Tibial artery (tissue), 4 donors: ENCODE measurements at regions of chr2 and their contacts with region 1.

Region 1: DNA sequence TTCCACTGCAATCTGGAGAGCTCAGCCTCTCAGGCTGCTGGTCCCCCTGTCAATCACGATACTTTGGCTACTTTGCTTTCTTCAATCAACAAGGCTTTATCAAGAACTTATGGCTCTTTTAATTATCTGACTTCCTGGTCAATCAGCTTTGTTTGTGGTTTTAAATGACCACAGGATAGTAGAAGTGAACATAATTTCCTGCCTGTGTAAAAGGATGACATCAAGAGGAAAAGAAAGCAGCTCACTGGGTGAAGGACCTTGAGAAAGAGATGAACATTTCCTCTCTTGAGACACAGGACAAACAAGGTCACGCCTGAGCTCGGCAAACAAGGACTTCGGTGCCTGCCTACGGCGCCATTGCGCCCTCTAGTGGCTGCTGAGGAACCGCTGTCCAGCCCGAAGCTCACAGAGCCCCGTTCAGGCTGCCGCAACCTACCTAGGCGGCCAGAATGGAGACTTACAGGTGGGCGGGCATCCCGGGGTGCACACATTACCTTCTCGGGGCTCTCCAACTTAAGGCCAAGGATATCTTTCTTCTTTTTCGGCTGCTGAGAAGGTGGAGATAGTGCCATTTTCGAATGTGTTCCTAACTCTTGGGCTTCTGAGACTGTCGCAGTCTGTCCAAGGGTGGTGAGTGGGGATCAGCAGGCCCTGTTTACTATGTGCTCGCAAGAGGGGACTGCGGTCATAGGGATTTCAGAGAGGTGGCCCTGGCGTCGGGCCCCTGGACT is 54.0 kb downstream of the IL1RL2 start:
- DNase-seq: peak; percentile 89 to 94
- H3K4me3 ChIP-seq: no peak overlapping the region
- H3K27ac ChIP-seq: peak overlapping the region; percentile 49 to 58
- H3K4me1 ChIP-seq: peaks cover 0 to 19% (median 8%) of the 10 kb centered on the region in 4 donors
- H3K27me3 ChIP-seq: no peaks in the 10 kb centered on the region
- CTCF ChIP-seq: peak; percentile 97

Region 2: DNA sequence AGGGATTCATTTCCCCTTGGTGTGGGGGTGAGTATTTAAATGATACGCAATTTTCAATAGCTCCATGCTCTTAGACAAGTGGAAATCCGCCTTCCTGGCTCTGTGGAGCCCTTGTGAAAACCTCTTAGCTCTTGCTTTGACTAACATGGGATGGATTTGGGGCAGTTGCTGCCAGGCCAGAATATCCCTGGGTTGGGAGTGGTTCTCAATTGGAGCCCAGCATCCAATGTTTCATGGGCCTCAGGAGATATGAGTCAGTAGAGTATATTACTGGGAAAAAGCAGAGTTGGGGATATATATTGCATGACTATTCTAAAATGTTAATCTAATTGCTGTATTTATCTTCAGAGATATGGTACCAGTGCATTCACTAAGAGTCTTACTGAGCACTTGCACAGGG is 353.5 kb before region 1 on chr2:
- intact Hi-C with region 1: loop called (anchors 5 kb)
- DNase-seq: no peak
- H3K4me3 ChIP-seq: no peak overlapping the region
- H3K27ac ChIP-seq: no peak overlapping the region
- H3K4me1 ChIP-seq: peaks cover 0 to 12% (median 3%) of the 10 kb centered on the region in 4 donors
- H3K27me3 ChIP-seq: no peaks in the 10 kb centered on the region
- CTCF ChIP-seq: no peak

Region 3: GRCh38 chr2:102172745-102173144 is 68.1 kb before region 1 on chr2:
- intact Hi-C with region 1: loop called (anchors 10 kb)
- DNase-seq: no peak
- H3K4me3 ChIP-seq: no peak overlapping the region
- H3K27ac ChIP-seq: no peak overlapping the region
- H3K4me1 ChIP-seq: no peaks in the 10 kb centered on the region
- H3K27me3 ChIP-seq: no peaks in the 10 kb centered on the region
- CTCF ChIP-seq: no peak

Region 4: GRCh38 chr2:102355526-102356380 is 114.9 kb after region 1 on chr2 and contains the start of gene IL18R1:
- intact Hi-C with region 1: loop called (anchors 10 kb)
- DNase-seq: peak; percentile 70 to 85
- H3K4me3 ChIP-seq: peak within 1 kb of the TSS; percentile 59 to 60
- H3K27ac ChIP-seq: peak within 1 kb of the TSS; percentile 30 to 61
- H3K4me1 ChIP-seq: peaks cover 0 to 10% (median 4%) of the 10 kb centered on the region in 4 donors
- H3K27me3 ChIP-seq: no peaks in the 10 kb centered on the region
- CTCF ChIP-seq: peak; percentile 72 to 86